B cell (primary cell): ENCODE measurements at regions of chr20 and their contacts with region 1.

Region 1: GRCh38 chr20:33443512-33444239 is at the start of gene SNTA1:
- DNase-seq: peak; percentile 90
- ATAC-seq: peak; percentile 89
- H3K4me3 ChIP-seq: peak within 1 kb of the TSS; percentile 70 to 87 (median 80)
- H3K4me3 Mint-ChIP-seq: peak within 1 kb of the TSS; percentile 94
- H3K27ac ChIP-seq: peak within 1 kb of the TSS; percentile 51 to 58
- H3K27ac Mint-ChIP-seq: peak within 1 kb of the TSS; percentile 91
- H3K4me1 ChIP-seq: peaks cover 13 to 23% of the 10 kb centered on the region in 2 donors
- H3K4me1 Mint-ChIP-seq: peaks cover 31% of the 10 kb centered on the region
- H3K27me3 ChIP-seq: no peaks in the 10 kb centered on the region
- H3K27me3 Mint-ChIP-seq: no peaks in the 10 kb centered on the region
- CTCF ChIP-seq: no peak
- total RNA-seq, gene SNTA1: 9.9 and 11.5 TPM in 2 replicates

Region 2: GRCh38 chr20:33250666-33251065 is 193.0 kb before region 1 on chr20:
- CTCF ChIA-PET with region 1: no interaction called
- POLR2A ChIA-PET with region 1: no interaction called
- intact Hi-C with region 1: no loop called
- DNase-seq: no peak
- ATAC-seq: no peak
- H3K4me3 ChIP-seq: no peak overlapping the region
- H3K4me3 Mint-ChIP-seq: no peak overlapping the region
- H3K27ac ChIP-seq: no peak overlapping the region
- H3K27ac Mint-ChIP-seq: no peak overlapping the region
- H3K4me1 ChIP-seq: no peaks in the 10 kb centered on the region
- H3K4me1 Mint-ChIP-seq: no peaks in the 10 kb centered on the region
- H3K27me3 ChIP-seq: no peaks in the 10 kb centered on the region
- H3K27me3 Mint-ChIP-seq: peaks cover 13% of the 10 kb centered on the region
- CTCF ChIP-seq: no peak

Region 3: DNA sequence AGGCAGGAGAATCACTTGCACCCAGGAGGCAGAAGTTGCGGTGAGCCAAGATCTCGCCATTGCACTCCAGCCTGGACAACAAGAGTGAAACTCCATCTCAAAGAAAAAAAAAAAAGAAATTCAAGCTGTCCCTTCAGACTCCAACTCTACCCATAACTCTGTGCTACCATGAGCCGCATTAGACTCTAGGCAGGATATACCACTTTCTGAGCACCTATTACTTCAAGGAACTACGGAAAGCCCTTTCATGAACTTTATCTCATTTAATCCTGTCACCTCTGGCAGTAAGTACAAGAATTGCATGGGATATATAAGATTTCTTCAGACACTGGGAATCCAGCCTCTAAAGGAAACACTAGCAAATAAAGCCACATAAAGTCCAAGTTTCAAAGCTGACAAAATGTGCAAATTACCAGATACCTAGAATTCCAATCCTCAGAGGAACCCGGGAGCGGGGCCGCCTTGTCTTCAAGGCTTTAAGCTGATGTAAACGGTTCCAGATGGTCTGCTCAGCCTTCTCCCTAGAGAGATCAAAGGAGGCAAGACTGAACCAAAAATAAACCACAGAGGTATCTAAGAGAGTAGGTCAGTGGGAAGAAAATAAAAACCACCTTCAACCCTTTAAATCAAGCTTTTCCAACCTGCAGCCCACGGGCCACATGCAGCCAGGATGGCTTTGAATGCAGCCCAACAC is 51.8 kb before region 1 on chr20:
- CTCF ChIA-PET with region 1: interaction called, 26 read pairs
- POLR2A ChIA-PET with region 1: interaction called, 4 read pairs
- intact Hi-C with region 1: loop called (anchors 1 kb)
- DNase-seq: no peak
- ATAC-seq: no peak
- H3K4me3 ChIP-seq: no peak overlapping the region
- H3K4me3 Mint-ChIP-seq: no peak overlapping the region
- H3K27ac ChIP-seq: no peak overlapping the region
- H3K27ac Mint-ChIP-seq: no peak overlapping the region
- H3K4me1 ChIP-seq: no peaks in the 10 kb centered on the region
- H3K4me1 Mint-ChIP-seq: peaks cover 18% of the 10 kb centered on the region
- H3K27me3 ChIP-seq: no peaks in the 10 kb centered on the region
- H3K27me3 Mint-ChIP-seq: no peaks in the 10 kb centered on the region
- CTCF ChIP-seq: no peak

Region 4: GRCh38 chr20:33401184-33401920 is 42.3 kb before region 1 on chr20 and contains the start of gene CDK5RAP1:
- CTCF ChIA-PET with region 1: interaction called, 33 read pairs
- POLR2A ChIA-PET with region 1: interaction called, 10 read pairs
- intact Hi-C with region 1: loop called (anchors 1 kb)
- DNase-seq: peak; percentile 91
- ATAC-seq: peak; percentile 98
- H3K4me3 ChIP-seq: peak within 1 kb of the TSS; percentile 89 to 99 (median 93)
- H3K4me3 Mint-ChIP-seq: peak within 1 kb of the TSS; percentile 96
- H3K27ac ChIP-seq: peak within 1 kb of the TSS; percentile 14 to 71
- H3K27ac Mint-ChIP-seq: peak within 1 kb of the TSS; percentile 89
- H3K4me1 ChIP-seq: peaks cover 19 to 34% of the 10 kb centered on the region in 2 donors
- H3K4me1 Mint-ChIP-seq: peaks cover 45% of the 10 kb centered on the region
- H3K27me3 ChIP-seq: no peaks in the 10 kb centered on the region
- H3K27me3 Mint-ChIP-seq: no peaks in the 10 kb centered on the region
- CTCF ChIP-seq: no peak
- total RNA-seq, gene CDK5RAP1: 50.4 and 52.6 TPM in 2 replicates

Region 5: DNA sequence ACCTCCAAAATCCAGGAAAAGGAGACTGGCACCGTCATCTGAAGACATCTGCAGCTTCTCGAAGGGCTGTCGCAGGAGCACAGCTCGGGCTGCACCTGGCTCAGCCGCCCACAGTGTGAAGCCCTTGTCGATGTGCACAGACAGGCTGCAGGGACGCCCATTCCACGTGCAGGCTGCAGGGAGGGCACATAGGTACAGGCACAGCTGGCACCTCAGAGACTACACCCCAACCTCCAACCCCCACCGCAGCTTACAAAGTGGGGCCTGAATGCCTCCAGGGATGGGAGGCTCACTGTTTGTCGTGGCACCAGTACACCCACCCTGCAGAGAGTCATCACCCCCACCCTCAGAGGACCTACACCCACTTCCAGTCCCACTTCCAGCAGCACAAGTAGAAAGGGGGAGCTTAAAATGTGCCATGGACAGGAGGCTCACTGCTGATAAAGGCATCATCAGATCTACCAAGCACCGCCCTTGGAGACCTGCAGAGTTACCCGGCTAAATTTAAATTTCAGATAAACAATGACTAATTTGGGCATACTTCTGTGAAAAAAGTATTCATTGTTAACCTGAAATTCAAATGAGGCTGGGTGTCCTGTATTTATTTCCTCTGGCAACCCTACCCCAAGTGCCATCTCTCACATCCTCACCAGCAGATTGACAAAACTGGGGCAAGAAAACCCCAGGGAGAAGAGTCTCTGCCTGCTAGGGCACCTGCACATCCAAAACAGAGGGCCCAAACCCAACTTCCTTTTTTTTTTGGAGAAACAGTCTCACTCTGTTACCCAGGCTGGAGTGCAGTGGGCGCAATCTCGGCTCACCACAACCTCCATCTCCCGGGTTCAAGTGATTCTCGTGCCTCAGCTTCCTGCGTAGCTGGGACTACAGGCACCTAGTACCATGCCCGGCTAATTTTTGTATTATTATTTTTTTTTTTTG is 34.7 kb before region 1 on chr20:
- CTCF ChIA-PET with region 1: interaction called, 20 read pairs
- POLR2A ChIA-PET with region 1: interaction called, 8 read pairs
- intact Hi-C with region 1: loop called (anchors 1 kb)
- DNase-seq: peak; percentile 83
- ATAC-seq: peak; percentile 90
- H3K4me3 ChIP-seq: peak overlapping the region in 3 of 5 experiments; percentile 25 to 35 (median 29)
- H3K4me3 Mint-ChIP-seq: peak overlapping the region; percentile 81
- H3K27ac ChIP-seq: peak overlapping the region; percentile 57 to 75
- H3K27ac Mint-ChIP-seq: peak overlapping the region; percentile 96
- H3K4me1 ChIP-seq: peaks cover 26 to 43% of the 10 kb centered on the region in 2 donors
- H3K4me1 Mint-ChIP-seq: peaks cover 46% of the 10 kb centered on the region
- H3K27me3 ChIP-seq: no peaks in the 10 kb centered on the region
- H3K27me3 Mint-ChIP-seq: no peaks in the 10 kb centered on the region
- CTCF ChIP-seq: no peak

Region 6: DNA sequence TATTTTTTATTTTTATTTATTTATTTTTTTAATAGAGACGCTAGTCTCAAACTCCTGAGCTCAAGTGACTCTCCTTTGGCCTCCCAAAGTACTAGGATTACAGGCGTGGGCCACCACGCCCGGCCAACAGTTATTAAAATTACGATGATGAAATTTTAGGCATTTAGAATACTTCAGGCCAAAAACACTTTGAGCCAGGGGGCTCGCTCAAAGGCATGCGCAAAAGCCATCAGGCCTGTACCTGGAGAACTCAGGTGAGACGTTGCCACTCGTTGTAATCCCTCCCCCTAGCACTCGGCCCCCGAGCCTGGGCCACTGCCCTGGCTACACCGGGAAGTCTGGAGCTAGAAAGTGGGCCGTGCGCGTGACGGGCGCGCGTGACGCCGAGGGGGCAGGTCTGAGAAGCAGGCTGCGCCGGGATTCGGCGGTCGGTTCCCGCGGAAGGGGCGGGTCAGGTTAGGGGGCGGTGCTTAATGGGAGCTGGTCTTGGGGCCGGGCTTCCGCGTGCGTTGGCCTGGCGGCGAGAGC is 45.9 kb after region 1 on chr20:
- CTCF ChIA-PET with region 1: no interaction called
- POLR2A ChIA-PET with region 1: interaction called, 4 read pairs
- intact Hi-C with region 1: loop called (anchors 1 kb)
- DNase-seq: peak; percentile 99
- ATAC-seq: peak; percentile 97
- H3K4me3 ChIP-seq: peak overlapping the region; percentile 24 to 73 (median 68)
- H3K4me3 Mint-ChIP-seq: peak overlapping the region; percentile 93
- H3K27ac ChIP-seq: peak overlapping the region; percentile 97 to 99
- H3K27ac Mint-ChIP-seq: peak overlapping the region; percentile 95
- H3K4me1 ChIP-seq: peaks cover 9 to 19% of the 10 kb centered on the region in 2 donors
- H3K4me1 Mint-ChIP-seq: peaks cover 16% of the 10 kb centered on the region
- H3K27me3 ChIP-seq: no peaks in the 10 kb centered on the region
- H3K27me3 Mint-ChIP-seq: no peaks in the 10 kb centered on the region
- CTCF ChIP-seq: no peak

Region 7: DNA sequence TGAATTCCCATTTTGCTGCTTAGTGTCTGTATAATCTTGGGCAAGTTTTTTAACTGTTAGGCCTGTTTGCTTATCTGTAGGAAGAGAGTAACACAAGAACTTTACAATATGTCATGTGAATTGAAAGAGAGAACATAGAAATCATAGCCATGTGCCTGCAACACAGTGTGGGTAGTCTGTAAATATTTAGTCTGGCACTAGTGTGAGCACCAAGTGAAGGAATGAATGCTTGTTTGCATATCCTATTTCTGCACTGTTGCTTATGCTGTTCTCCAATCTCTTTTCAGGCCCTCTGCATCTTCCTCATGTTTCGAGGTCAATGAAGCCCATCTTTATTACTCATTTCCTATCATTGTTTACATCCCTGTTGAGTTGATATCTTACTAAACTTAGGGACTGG is 95.5 kb after region 1 on chr20:
- CTCF ChIA-PET with region 1: no interaction called
- POLR2A ChIA-PET with region 1: no interaction called
- intact Hi-C with region 1: no loop called
- DNase-seq: no peak
- ATAC-seq: no peak
- H3K4me3 ChIP-seq: no peak overlapping the region
- H3K4me3 Mint-ChIP-seq: no peak overlapping the region
- H3K27ac ChIP-seq: no peak overlapping the region
- H3K27ac Mint-ChIP-seq: no peak overlapping the region
- H3K4me1 ChIP-seq: peaks cover 6 to 7% of the 10 kb centered on the region in 2 donors
- H3K4me1 Mint-ChIP-seq: peaks cover 20% of the 10 kb centered on the region
- H3K27me3 ChIP-seq: no peaks in the 10 kb centered on the region
- H3K27me3 Mint-ChIP-seq: no peaks in the 10 kb centered on the region
- CTCF ChIP-seq: no peak

Region 8: GRCh38 chr20:34111702-34112599 is 668.3 kb after region 1 on chr20 and contains the start of gene EIF2S2:
- CTCF ChIA-PET with region 1: no interaction called
- POLR2A ChIA-PET with region 1: interaction called, 6 read pairs
- intact Hi-C with region 1: loop called (anchors 5 kb)
- DNase-seq: peak; percentile 99
- ATAC-seq: peak; percentile 91
- H3K4me3 ChIP-seq: peak within 1 kb of the TSS; percentile 63 to 97 (median 90)
- H3K4me3 Mint-ChIP-seq: peak within 1 kb of the TSS; percentile 99
- H3K27ac ChIP-seq: peak within 1 kb of the TSS; percentile 80 to 95
- H3K27ac Mint-ChIP-seq: peak within 1 kb of the TSS; percentile 99
- H3K4me1 ChIP-seq: peaks cover 21 to 28% of the 10 kb centered on the region in 2 donors
- H3K4me1 Mint-ChIP-seq: peaks cover 45% of the 10 kb centered on the region
- H3K27me3 ChIP-seq: no peaks in the 10 kb centered on the region
- H3K27me3 Mint-ChIP-seq: no peaks in the 10 kb centered on the region
- CTCF ChIP-seq: no peak
- total RNA-seq, gene EIF2S2: 26.4 and 27.7 TPM in 2 replicates

Region 9: GRCh38 chr20:34907616-34908469 is 1464.2 kb after region 1 on chr20:
- CTCF ChIA-PET with region 1: no interaction called
- POLR2A ChIA-PET with region 1: interaction called, 11 read pairs
- intact Hi-C with region 1: no loop called
- DNase-seq: no peak
- ATAC-seq: no peak
- H3K4me3 ChIP-seq: no peak overlapping the region
- H3K4me3 Mint-ChIP-seq: no peak overlapping the region
- H3K27ac ChIP-seq: no peak overlapping the region
- H3K27ac Mint-ChIP-seq: no peak overlapping the region
- H3K4me1 ChIP-seq: no peaks in the 10 kb centered on the region
- H3K4me1 Mint-ChIP-seq: no peaks in the 10 kb centered on the region
- H3K27me3 ChIP-seq: no peaks in the 10 kb centered on the region
- H3K27me3 Mint-ChIP-seq: no peaks in the 10 kb centered on the region
- CTCF ChIP-seq: no peak